ENCODE measurements at regions of chr7 and their contacts with region 1.

Region 1: DNA sequence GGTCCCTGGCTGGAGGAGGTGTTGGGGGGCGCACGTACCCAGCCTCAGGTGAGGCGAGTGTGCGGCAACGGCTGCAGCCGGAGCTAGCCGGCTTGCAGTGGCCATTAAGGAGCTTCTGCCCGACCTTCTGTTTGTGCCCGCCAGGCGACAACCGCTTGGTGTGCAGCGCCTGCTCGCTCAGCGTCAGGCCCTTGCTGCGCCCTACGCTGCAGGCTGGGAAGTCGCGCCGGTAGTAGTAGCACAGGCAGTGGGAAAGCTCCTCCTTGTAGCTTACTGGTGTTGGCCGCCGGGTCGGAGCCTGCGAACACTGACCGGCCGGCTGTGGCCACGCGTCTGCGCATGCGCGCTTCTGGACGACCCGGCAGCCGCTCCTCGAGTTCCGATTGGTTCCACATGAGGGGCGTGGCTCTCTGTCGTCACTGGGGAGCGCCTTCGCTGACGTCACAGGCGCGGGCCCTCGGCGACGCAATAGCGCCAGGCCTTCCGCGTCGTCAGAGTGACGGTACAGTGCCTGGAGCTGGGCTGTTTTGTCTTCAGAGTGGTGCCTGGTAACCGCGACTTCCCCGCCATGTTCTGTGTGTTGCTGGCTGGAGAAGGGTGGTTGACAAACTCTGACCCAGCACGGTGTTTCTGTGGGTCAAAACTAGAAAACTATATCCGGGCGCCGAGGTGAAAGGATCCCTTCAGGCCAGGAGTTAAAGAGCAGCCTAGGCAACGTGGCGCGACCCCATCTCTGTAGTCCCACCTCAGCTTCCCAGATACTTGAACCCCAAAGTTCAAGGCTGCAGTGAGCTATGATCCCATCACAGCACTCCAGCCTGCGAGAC is 76.3 kb upstream of the TMEM248 start:
- DNase-seq: peak; percentile 99
- H3K4me3 Mint-ChIP-seq: peak overlapping the region; percentile 97
- H3K27ac Mint-ChIP-seq: peak overlapping the region; percentile 99
- H3K4me1 Mint-ChIP-seq: peaks cover 20% of the 10 kb centered on the region
- H3K27me3 Mint-ChIP-seq: no peaks in the 10 kb centered on the region

Region 2: GRCh38 chr7:66628361-66629140 is 216.2 kb before region 1 on chr7 and contains the start of gene KCTD7:
- intact Hi-C with region 1: loop called (anchors 10 kb)
- DNase-seq: peak; percentile 94
- H3K4me3 Mint-ChIP-seq: peak within 1 kb of the TSS; percentile 87
- H3K27ac Mint-ChIP-seq: peak within 1 kb of the TSS; percentile 84
- H3K4me1 Mint-ChIP-seq: peaks cover 38% of the 10 kb centered on the region
- H3K27me3 Mint-ChIP-seq: no peaks in the 10 kb centered on the region
- total RNA-seq, gene KCTD7: 10.3 and 12.0 TPM in 2 replicates

Region 3: GRCh38 chr7:66859794-66860645 is 15.3 kb after region 1 on chr7:
- intact Hi-C with region 1: loop called (anchors 1 kb)
- DNase-seq: no peak
- H3K4me3 Mint-ChIP-seq: peak overlapping the region; percentile 65
- H3K27ac Mint-ChIP-seq: peak overlapping the region; percentile 100
- H3K4me1 Mint-ChIP-seq: peaks cover 20% of the 10 kb centered on the region
- H3K27me3 Mint-ChIP-seq: no peaks in the 10 kb centered on the region

Region 4: GRCh38 chr7:66886152-66886551 is 41.4 kb after region 1 on chr7:
- intact Hi-C with region 1: loop called (anchors 5 kb)
- DNase-seq: no peak
- H3K4me3 Mint-ChIP-seq: no peak overlapping the region
- H3K27ac Mint-ChIP-seq: no peak overlapping the region
- H3K4me1 Mint-ChIP-seq: peaks cover 16% of the 10 kb centered on the region
- H3K27me3 Mint-ChIP-seq: no peaks in the 10 kb centered on the region

Measured in activated T-helper 2 cell treated with anti-CD3 and anti-CD28 coated beads, Interferon-gamma antibody, Interleukin-2, Interleukin-4, amounts not matched to agents 10 μg/mL and 5 μg/mL and 100 μg/mL, durations not matched to agents 14 hours and 24 hours and 36 hours (primary cell).